ENCODE measurements at regions of chr3 and their contacts with region 1.

Region 1: GRCh38 chr3:52897130-52898122 is at the start of gene STIMATE:
- DNase-seq: peak; percentile 90
- ATAC-seq: peak; percentile 95
- H3K4me3 ChIP-seq: peak within 1 kb of the TSS; percentile 69 to 84 (median 78)
- H3K4me3 Mint-ChIP-seq: peak within 1 kb of the TSS; percentile 93
- H3K27ac ChIP-seq: peak within 1 kb of the TSS in 1 of 2 donors; percentile 52
- H3K27ac Mint-ChIP-seq: peak within 1 kb of the TSS; percentile 78
- H3K4me1 ChIP-seq: peaks cover 17 to 27% of the 10 kb centered on the region in 2 donors
- H3K4me1 Mint-ChIP-seq: peaks cover 48% of the 10 kb centered on the region
- H3K27me3 ChIP-seq: no peaks in the 10 kb centered on the region
- H3K27me3 Mint-ChIP-seq: no peaks in the 10 kb centered on the region
- CTCF ChIP-seq: no peak
- total RNA-seq, gene STIMATE: 37.7 and 38.4 TPM in 2 replicates

Region 2: GRCh38 chr3:51670823-51671733 is 1226.3 kb before region 1 on chr3 and contains the start of gene TEX264:
- CTCF ChIA-PET with region 1: no interaction called
- POLR2A ChIA-PET with region 1: no interaction called
- intact Hi-C with region 1: loop called (anchors 5 kb)
- DNase-seq: peak; percentile 97
- ATAC-seq: peak; percentile 85
- H3K4me3 ChIP-seq: peak within 1 kb of the TSS; percentile 46 to 99 (median 96)
- H3K4me3 Mint-ChIP-seq: peak within 1 kb of the TSS; percentile 91
- H3K27ac ChIP-seq: peak within 1 kb of the TSS; percentile 81 to 85
- H3K27ac Mint-ChIP-seq: peak within 1 kb of the TSS; percentile 92
- H3K4me1 ChIP-seq: peaks cover 25 to 55% of the 10 kb centered on the region in 2 donors
- H3K4me1 Mint-ChIP-seq: peaks cover 61% of the 10 kb centered on the region
- H3K27me3 ChIP-seq: no peaks in the 10 kb centered on the region
- H3K27me3 Mint-ChIP-seq: no peaks in the 10 kb centered on the region
- CTCF ChIP-seq: no peak
- total RNA-seq, gene TEX264: 31.8 and 39.1 TPM in 2 replicates

Region 3: GRCh38 chr3:52770496-52771333 is 126.7 kb before region 1 on chr3 and contains the start of gene NEK4:
- CTCF ChIA-PET with region 1: interaction called, 4 read pairs
- POLR2A ChIA-PET with region 1: no interaction called
- intact Hi-C with region 1: loop called (anchors 2 kb)
- DNase-seq: peak; percentile 93
- ATAC-seq: peak; percentile 96
- H3K4me3 ChIP-seq: peak within 1 kb of the TSS; percentile 57 to 85 (median 70)
- H3K4me3 Mint-ChIP-seq: peak within 1 kb of the TSS; percentile 99
- H3K27ac ChIP-seq: peak within 1 kb of the TSS; percentile 71 to 89
- H3K27ac Mint-ChIP-seq: peak within 1 kb of the TSS; percentile 98
- H3K4me1 ChIP-seq: peaks cover 9 to 12% of the 10 kb centered on the region in 2 donors
- H3K4me1 Mint-ChIP-seq: peaks cover 18% of the 10 kb centered on the region
- H3K27me3 ChIP-seq: no peaks in the 10 kb centered on the region
- H3K27me3 Mint-ChIP-seq: no peaks in the 10 kb centered on the region
- CTCF ChIP-seq: peak; percentile 27
- total RNA-seq, gene NEK4: 33.8 and 38.4 TPM in 2 replicates

Region 4: DNA sequence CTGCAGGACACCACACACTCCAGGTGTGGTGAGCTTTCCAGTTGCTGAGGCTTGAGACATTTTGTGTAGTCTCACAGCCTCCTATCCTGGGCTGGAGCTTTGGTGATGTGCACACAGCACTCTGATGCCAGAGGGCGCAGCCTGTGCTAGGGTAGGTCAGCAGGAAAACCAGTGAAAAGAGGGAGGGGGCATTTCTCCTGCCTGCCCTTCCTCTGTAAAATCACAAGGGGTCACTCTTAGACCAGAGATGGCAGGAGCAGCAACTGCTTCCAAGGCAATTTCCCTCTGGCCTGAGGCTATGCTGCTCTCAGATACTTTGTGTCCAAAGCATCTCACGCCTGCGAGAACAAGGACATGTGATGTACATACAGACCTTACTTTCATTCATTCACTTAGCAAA is 46.1 kb before region 1 on chr3:
- CTCF ChIA-PET with region 1: interaction called, 7 read pairs
- POLR2A ChIA-PET with region 1: no interaction called
- intact Hi-C with region 1: loop called (anchors 5 kb)
- DNase-seq: peak; percentile 49
- ATAC-seq: peak; percentile 73
- H3K4me3 ChIP-seq: no peak overlapping the region
- H3K4me3 Mint-ChIP-seq: no peak overlapping the region
- H3K27ac ChIP-seq: no peak overlapping the region
- H3K27ac Mint-ChIP-seq: no peak overlapping the region
- H3K4me1 ChIP-seq: no peaks in the 10 kb centered on the region
- H3K4me1 Mint-ChIP-seq: no peaks in the 10 kb centered on the region
- H3K27me3 ChIP-seq: no peaks in the 10 kb centered on the region
- H3K27me3 Mint-ChIP-seq: no peaks in the 10 kb centered on the region
- CTCF ChIP-seq: peak; percentile 55

Region 5: GRCh38 chr3:52934630-52935530 is 37.5 kb after region 1 on chr3:
- CTCF ChIA-PET with region 1: interaction called, 4 read pairs
- POLR2A ChIA-PET with region 1: no interaction called
- intact Hi-C with region 1: loop called (anchors 5 kb)
- DNase-seq: peak; percentile 69
- ATAC-seq: peak; percentile 87
- H3K4me3 ChIP-seq: no peak overlapping the region
- H3K4me3 Mint-ChIP-seq: no peak overlapping the region
- H3K27ac ChIP-seq: peak overlapping the region in 1 of 2 donors; percentile 50
- H3K27ac Mint-ChIP-seq: peak overlapping the region; percentile 53
- H3K4me1 ChIP-seq: peaks cover 19 to 20% of the 10 kb centered on the region in 2 donors
- H3K4me1 Mint-ChIP-seq: peaks cover 21% of the 10 kb centered on the region
- H3K27me3 ChIP-seq: no peaks in the 10 kb centered on the region
- H3K27me3 Mint-ChIP-seq: no peaks in the 10 kb centered on the region
- CTCF ChIP-seq: peak; percentile 83

Measured in B cell (primary cell).